Endothelial cell of umbilical vein (primary cell): ENCODE measurements at regions of chr1 and their contacts with region 1.

Region 1: DNA sequence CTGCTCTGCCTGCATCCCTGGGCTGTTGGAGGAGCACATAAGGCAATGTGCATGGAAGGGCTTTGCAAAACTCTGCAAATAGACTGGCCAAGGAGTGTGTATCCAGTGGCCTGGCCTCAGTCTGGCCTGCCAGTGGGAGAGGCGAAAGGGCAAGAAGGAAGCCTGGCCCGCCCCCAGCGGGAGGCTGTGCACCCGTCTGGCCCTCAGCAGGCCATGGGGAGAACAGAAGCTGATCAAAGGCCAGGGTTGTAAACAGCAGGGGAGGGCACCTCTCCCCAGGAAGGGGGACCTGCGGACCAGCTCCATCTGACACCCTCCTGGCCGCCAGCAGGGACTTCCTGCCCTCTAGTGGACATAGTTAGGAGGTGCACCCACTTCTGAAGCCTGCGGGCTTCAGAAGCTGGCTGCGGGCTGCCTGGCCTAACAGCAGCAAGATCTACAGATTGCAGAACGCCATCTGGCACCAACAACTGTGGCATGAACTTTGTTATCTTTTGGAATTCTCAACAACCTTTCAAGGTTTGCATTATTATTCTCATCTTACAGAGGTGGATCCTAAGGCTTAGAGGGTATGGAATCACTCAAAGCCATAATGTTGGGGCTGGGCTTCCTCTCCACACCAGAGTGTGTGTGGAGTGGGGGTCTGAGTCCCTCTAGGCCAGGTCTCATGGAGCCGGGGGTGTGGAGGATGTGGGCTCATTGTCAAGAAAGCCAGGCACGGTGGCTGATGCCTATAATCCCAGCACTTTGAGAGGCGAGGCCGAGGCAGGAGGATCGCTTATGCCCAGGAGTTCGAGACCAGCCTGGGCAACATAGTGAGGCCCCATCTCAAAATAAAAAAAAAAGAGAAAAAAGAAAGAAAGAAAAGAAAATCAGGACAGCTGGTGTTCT is 18.9 kb upstream of the CDK18 start:
- DNase-seq: peak; percentile 55
- H3K4me3 ChIP-seq: no peak overlapping the region
- H3K27ac ChIP-seq: no peak overlapping the region
- H3K4me1 ChIP-seq: no peaks in the 10 kb centered on the region
- H3K27me3 ChIP-seq: peaks cover 7 to 13% of the 10 kb centered on the region in 2 experiments
- CTCF ChIP-seq: peak; percentile 85 to 96
- POLR2A ChIP-seq: no peak

Region 2: DNA sequence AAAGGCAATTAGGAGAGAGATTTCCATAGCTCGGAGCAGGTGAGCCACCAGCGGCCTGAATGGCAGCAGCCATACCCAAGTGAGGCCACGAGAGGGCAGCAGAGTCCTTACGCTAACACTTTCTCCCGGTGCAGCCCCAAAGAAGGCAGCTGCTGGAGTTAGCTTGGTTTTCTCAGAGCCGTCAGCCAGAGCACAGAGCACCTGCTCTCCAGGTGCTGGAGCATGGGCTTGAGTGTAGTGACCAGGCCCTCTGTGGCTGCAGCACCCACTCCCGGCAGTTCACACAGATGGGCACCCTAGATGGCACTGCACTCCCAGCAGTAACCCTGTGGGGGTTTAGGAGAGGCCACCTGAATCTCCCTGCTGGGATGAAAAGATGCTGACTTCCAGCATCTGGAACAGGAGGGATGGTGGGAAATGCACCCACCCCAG is 212.0 kb before region 1 on chr1:
- CTCF ChIA-PET with region 1: interaction called, 25 read pairs
- POLR2A ChIA-PET with region 1: no interaction called
- dilution Hi-C with region 1: no loop called
- intact Hi-C with region 1: loop called (anchors 1 kb)
- DNase-seq: peak; percentile 69
- H3K4me3 ChIP-seq: no peak overlapping the region
- H3K27ac ChIP-seq: no peak overlapping the region
- H3K4me1 ChIP-seq: peaks cover 18% of the 10 kb centered on the region
- H3K27me3 ChIP-seq: no peaks in the 10 kb centered on the region
- CTCF ChIP-seq: peak; percentile 97 to 98
- POLR2A ChIP-seq: no peak

Region 3: DNA sequence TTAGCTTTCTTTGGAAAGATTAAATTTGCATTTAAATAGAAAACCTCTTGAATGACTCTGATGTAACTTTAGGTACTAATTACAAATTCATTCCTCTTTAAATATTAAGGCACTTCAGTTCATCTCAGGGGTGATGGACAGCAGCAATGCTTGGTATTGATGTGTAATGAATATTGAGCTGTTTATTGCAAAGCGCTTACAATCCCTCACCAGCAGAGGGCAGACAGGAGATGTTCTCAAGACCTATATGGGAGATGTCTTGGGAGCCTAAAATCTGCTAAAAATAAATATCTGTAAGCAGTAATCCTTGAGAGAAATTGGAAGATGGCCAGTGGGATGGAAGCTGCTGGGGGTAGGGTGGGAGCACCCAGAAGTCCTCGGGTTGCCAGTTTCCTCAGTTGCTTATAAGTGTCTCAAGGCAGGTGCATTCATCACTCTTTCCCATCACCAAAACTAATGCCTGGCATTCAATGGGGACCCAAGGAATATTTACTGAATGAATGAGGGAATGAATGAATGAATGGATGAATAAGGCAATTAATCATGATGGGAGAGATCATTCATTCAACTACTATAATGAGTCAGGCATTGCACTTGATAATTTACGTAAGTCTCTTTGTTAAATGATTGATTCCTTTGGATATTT is 131.2 kb before region 1 on chr1:
- CTCF ChIA-PET with region 1: interaction called, 243 read pairs
- POLR2A ChIA-PET with region 1: no interaction called
- dilution Hi-C with region 1: no loop called
- intact Hi-C with region 1: loop called (anchors 1 kb)
- DNase-seq: peak; percentile 63
- H3K4me3 ChIP-seq: no peak overlapping the region
- H3K27ac ChIP-seq: no peak overlapping the region
- H3K4me1 ChIP-seq: no peaks in the 10 kb centered on the region
- H3K27me3 ChIP-seq: peaks cover 4 to 30% of the 10 kb centered on the region in 2 experiments
- CTCF ChIP-seq: peak; percentile 66 to 69
- POLR2A ChIP-seq: no peak

Region 4: DNA sequence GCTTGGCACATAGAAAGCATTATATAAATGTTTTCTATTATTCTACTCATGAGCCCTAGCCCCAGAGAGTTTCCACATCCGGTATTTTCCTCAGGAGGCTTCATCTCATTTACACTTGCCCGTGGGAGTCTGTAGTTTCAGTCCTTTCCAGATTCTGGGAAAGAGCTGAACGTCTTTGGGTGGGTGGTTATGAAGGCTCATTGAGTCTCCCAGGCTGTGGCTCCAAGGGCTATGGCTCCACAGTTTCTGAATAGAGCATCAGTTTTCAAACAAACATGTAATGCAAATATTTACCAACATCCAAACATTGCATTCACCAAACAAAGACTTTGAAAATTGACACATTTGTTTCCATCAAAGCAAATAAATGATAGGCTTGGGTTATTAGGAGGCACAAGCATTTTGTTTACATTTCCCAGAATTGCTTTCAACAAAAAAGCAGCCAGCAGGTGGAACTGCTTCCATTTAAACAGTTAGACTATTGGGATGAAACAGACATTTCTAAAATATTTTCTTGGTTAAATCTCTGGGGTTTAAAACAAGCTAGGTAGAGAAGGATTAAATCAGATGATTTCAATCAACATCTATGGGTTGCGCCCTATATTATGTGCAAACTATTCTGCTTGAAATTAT is 62.5 kb before region 1 on chr1:
- CTCF ChIA-PET with region 1: interaction called, 38 read pairs
- POLR2A ChIA-PET with region 1: no interaction called
- dilution Hi-C with region 1: no loop called
- intact Hi-C with region 1: no loop called
- DNase-seq: no peak
- H3K4me3 ChIP-seq: no peak overlapping the region
- H3K27ac ChIP-seq: no peak overlapping the region
- H3K4me1 ChIP-seq: no peaks in the 10 kb centered on the region
- H3K27me3 ChIP-seq: peaks cover 39 to 46% of the 10 kb centered on the region in 2 experiments
- CTCF ChIP-seq: no peak
- POLR2A ChIP-seq: no peak

Region 5: DNA sequence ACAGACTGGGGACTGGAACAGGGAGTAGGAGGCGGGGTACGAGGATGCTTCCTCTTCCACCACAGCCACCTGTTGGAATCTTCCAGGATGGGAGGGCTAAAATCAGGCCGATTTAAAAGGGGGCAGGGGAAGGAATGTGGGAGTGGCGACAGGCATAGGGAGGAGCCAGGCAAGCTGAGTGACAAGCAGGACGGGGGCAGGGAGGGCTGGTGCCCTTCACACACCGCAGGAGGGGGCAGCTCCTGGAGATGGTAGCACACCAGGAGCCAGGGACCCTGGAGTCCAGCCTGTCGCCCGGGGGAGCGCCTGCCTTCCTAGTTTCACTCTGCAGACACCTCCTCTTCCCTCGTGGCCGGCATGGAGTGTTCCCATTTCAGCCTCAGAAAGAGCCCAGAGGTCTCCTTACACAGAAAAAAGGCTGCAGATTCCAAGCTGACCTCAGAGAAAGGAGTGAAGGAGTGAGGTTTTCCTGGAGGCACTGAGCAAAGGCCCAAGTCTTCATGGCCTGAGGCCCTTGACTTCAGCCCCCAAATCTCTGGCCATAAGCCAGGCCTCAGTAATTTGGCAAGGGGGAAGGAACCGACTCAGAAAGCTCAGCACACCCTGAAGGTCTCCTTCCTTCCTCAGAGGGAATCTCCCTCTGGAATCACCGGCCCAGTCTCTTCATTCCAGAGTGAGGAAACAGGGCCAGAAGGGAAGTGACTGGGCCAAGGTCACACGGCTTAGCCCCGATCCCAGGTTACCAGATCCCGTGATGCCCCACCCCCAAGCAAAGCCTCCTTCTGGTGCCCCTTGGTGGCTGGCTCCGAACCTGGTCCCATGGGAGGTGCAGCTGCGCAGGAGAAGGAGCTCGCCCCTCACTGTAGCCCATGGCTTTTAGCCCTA is 37.9 kb before region 1 on chr1:
- CTCF ChIA-PET with region 1: interaction called, 12 read pairs
- POLR2A ChIA-PET with region 1: no interaction called
- dilution Hi-C with region 1: no loop called
- intact Hi-C with region 1: no loop called
- DNase-seq: no peak
- H3K4me3 ChIP-seq: no peak overlapping the region
- H3K27ac ChIP-seq: no peak overlapping the region
- H3K4me1 ChIP-seq: no peaks in the 10 kb centered on the region
- H3K27me3 ChIP-seq: peaks cover 34 to 35% of the 10 kb centered on the region in 2 experiments
- CTCF ChIP-seq: no peak
- POLR2A ChIP-seq: no peak

Region 6: GRCh38 chr1:205543411-205544301 is 58.1 kb after region 1 on chr1:
- CTCF ChIA-PET with region 1: interaction called, 11 read pairs
- POLR2A ChIA-PET with region 1: no interaction called
- dilution Hi-C with region 1: no loop called
- intact Hi-C with region 1: no loop called
- DNase-seq: peak; percentile 95
- H3K4me3 ChIP-seq: peak overlapping the region in 2 of 3 experiments; percentile 32 to 39
- H3K27ac ChIP-seq: peak overlapping the region; percentile 98
- H3K4me1 ChIP-seq: peaks cover 9% of the 10 kb centered on the region
- H3K27me3 ChIP-seq: peaks cover 2 to 5% of the 10 kb centered on the region in 2 experiments
- CTCF ChIP-seq: peak in 1 of 2 donors; percentile 5
- POLR2A ChIP-seq: no peak

Region 7: GRCh38 chr1:205565784-205566183 is 80.2 kb after region 1 on chr1:
- CTCF ChIA-PET with region 1: no interaction called
- POLR2A ChIA-PET with region 1: no interaction called
- dilution Hi-C with region 1: no loop called
- intact Hi-C with region 1: no loop called
- DNase-seq: no peak
- H3K4me3 ChIP-seq: no peak overlapping the region
- H3K27ac ChIP-seq: no peak overlapping the region
- H3K4me1 ChIP-seq: no peaks in the 10 kb centered on the region
- H3K27me3 ChIP-seq: peaks cover 39 to 61% of the 10 kb centered on the region in 2 experiments
- CTCF ChIP-seq: no peak
- POLR2A ChIP-seq: no peak